PC-9 (cell line): ENCODE measurements at regions of chr3 and their contacts with region 1.

Region 1: DNA sequence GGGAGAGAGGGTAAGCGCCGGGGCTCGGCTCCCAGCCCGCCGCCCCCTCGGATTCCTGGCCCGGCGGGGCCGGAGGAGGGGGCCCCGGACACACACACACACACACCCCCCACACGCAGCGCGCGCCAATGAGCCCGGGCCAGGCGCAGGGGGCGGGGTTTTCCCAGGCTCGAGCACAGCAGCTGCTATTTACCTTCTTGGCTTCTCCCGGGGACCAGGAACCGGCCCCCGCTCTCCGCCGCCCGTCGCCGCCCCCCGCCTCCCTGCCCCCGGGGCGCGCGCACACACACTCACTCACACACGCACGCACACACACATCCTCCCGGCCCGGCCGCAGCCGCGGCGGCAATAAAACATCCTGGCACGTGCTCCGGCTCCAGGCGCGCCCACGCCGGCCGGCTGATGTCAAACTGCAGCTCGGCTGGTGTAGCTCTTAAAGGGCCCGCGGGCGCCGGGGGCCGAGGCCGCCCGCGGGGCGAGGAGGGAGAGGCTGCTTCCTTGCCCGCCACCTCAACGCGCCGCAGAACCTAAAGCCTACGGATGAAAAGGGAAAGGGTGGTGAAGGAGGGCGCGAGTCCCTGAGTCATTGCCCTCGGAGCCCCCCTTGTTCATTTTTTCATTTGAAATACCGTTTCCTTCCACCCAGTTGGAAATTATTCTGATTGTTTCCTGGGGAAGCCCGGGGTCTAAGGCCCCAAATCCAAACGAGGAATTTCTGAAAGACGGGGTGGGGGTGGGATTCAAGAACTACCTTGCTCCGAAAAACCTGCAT is 1.0 kb upstream of the HES1 start:
- DNase-seq: peak; percentile 96 to 100
- H3K4me3 ChIP-seq: peak overlapping the region; percentile 55
- H3K27ac ChIP-seq: peak overlapping the region; percentile 88
- H3K4me1 ChIP-seq: peaks cover 60% of the 10 kb centered on the region
- H3K27me3 ChIP-seq: no peaks in the 10 kb centered on the region
- CTCF ChIP-seq: no peak

Region 2: GRCh38 chr3:193665370-193665989 is 469.5 kb before region 1 on chr3:
- CTCF ChIA-PET with region 1: interaction called, 4 read pairs
- POLR2A ChIA-PET with region 1: interaction called, 4 read pairs
- intact Hi-C with region 1: loop called (anchors 1 kb)
- DNase-seq: peak in 1 of 2 experiments; percentile 70
- H3K4me3 ChIP-seq: no peak overlapping the region
- H3K27ac ChIP-seq: no peak overlapping the region
- H3K4me1 ChIP-seq: no peaks in the 10 kb centered on the region
- H3K27me3 ChIP-seq: no peaks in the 10 kb centered on the region
- CTCF ChIP-seq: peak; percentile 93

Region 3: GRCh38 chr3:193831495-193832455 is 303.2 kb before region 1 on chr3:
- CTCF ChIA-PET with region 1: no interaction called
- POLR2A ChIA-PET with region 1: interaction called, 4 read pairs
- intact Hi-C with region 1: loop called (anchors 1 kb)
- DNase-seq: peak; percentile 87 to 97
- H3K4me3 ChIP-seq: no peak overlapping the region
- H3K27ac ChIP-seq: peak overlapping the region; percentile 96
- H3K4me1 ChIP-seq: peaks cover 89% of the 10 kb centered on the region
- H3K27me3 ChIP-seq: no peaks in the 10 kb centered on the region
- CTCF ChIP-seq: no peak

Region 4: GRCh38 chr3:193910886-193911738 is 223.8 kb before region 1 on chr3:
- CTCF ChIA-PET with region 1: no interaction called
- POLR2A ChIA-PET with region 1: no interaction called
- intact Hi-C with region 1: loop called (anchors 1 kb)
- DNase-seq: peak; percentile 63 to 94
- H3K4me3 ChIP-seq: no peak overlapping the region
- H3K27ac ChIP-seq: peak overlapping the region; percentile 69
- H3K4me1 ChIP-seq: peaks cover 26% of the 10 kb centered on the region
- H3K27me3 ChIP-seq: no peaks in the 10 kb centered on the region
- CTCF ChIP-seq: no peak

Region 5: GRCh38 chr3:194003125-194004057 is 131.6 kb before region 1 on chr3:
- CTCF ChIA-PET with region 1: interaction called, 4 read pairs
- POLR2A ChIA-PET with region 1: interaction called, 68 read pairs
- intact Hi-C with region 1: loop called (anchors 1 kb)
- DNase-seq: peak; percentile 98
- H3K4me3 ChIP-seq: peak overlapping the region; percentile 35; the same call in 1 of the 2 replicates
- H3K27ac ChIP-seq: peak overlapping the region; percentile 88
- H3K4me1 ChIP-seq: peaks cover 40% of the 10 kb centered on the region
- H3K27me3 ChIP-seq: no peaks in the 10 kb centered on the region
- CTCF ChIP-seq: no peak

Region 6: GRCh38 chr3:194112120-194113106 is 22.5 kb before region 1 on chr3:
- CTCF ChIA-PET with region 1: no interaction called
- POLR2A ChIA-PET with region 1: interaction called, 23 read pairs
- intact Hi-C with region 1: loop called (anchors 1 kb)
- DNase-seq: peak; percentile 85 to 100
- H3K4me3 ChIP-seq: peak overlapping the region; percentile 2; the same call in 1 of the 2 replicates
- H3K27ac ChIP-seq: peak overlapping the region; percentile 38
- H3K4me1 ChIP-seq: peaks cover 18% of the 10 kb centered on the region
- H3K27me3 ChIP-seq: no peaks in the 10 kb centered on the region
- CTCF ChIP-seq: no peak

Region 7: GRCh38 chr3:194486540-194487288 is 351.8 kb after region 1 on chr3 and contains the start of gene ATP13A3:
- CTCF ChIA-PET with region 1: no interaction called
- POLR2A ChIA-PET with region 1: interaction called, 6 read pairs
- intact Hi-C with region 1: loop called (anchors 5 kb)
- DNase-seq: peak; percentile 80 to 93
- H3K4me3 ChIP-seq: peak within 1 kb of the TSS; percentile 64
- H3K27ac ChIP-seq: peak within 1 kb of the TSS; percentile 96
- H3K4me1 ChIP-seq: peaks cover 71% of the 10 kb centered on the region
- H3K27me3 ChIP-seq: no peaks in the 10 kb centered on the region
- CTCF ChIP-seq: no peak
- total RNA-seq, gene ATP13A3: 203 and 242 TPM in 2 replicates